Activated CD4-positive, alpha-beta T cell treated with anti-CD3 and anti-CD28 coated beads for 36 hours (primary cell): ENCODE measurements at regions of chr16 and their contacts with region 1.

Region 1: GRCh38 chr16:30922960-30923535 is 324 bp upstream of the FBXL19 start:
- DNase-seq: peak; percentile 98
- ATAC-seq: peak; percentile 76
- H3K4me3 Mint-ChIP-seq: peak overlapping the region; percentile 88
- H3K27ac Mint-ChIP-seq: peak overlapping the region; percentile 100
- H3K4me1 Mint-ChIP-seq: peaks cover 20% of the 10 kb centered on the region
- H3K27me3 Mint-ChIP-seq: no peaks in the 10 kb centered on the region

Region 2: GRCh38 chr16:30370444-30371247 is 552.4 kb before region 1 on chr16 and contains the start of gene TBC1D10B:
- CTCF ChIA-PET with region 1: no interaction called
- POLR2A ChIA-PET with region 1: no interaction called
- intact Hi-C with region 1: loop called in 1 of 2 experiments (anchors 2 kb)
- DNase-seq: peak; percentile 99
- ATAC-seq: peak; percentile 88
- H3K4me3 Mint-ChIP-seq: peak within 1 kb of the TSS; percentile 89
- H3K27ac Mint-ChIP-seq: peak within 1 kb of the TSS; percentile 97
- H3K4me1 Mint-ChIP-seq: peaks cover 40% of the 10 kb centered on the region
- H3K27me3 Mint-ChIP-seq: no peaks in the 10 kb centered on the region
- total RNA-seq, gene TBC1D10B: 38.1 to 43.4 TPM

Region 3: GRCh38 chr16:30747799-30748634 is 175.0 kb before region 1 on chr16 and contains the start of gene PHKG2:
- CTCF ChIA-PET with region 1: interaction called, 4 read pairs
- POLR2A ChIA-PET with region 1: interaction called, 3 read pairs
- intact Hi-C with region 1: loop called in 1 of 2 experiments (anchors 2 kb)
- DNase-seq: peak; percentile 99
- ATAC-seq: peak; percentile 99
- H3K4me3 Mint-ChIP-seq: peak within 1 kb of the TSS; percentile 88
- H3K27ac Mint-ChIP-seq: peak within 1 kb of the TSS; percentile 88
- H3K4me1 Mint-ChIP-seq: peaks cover 21% of the 10 kb centered on the region
- H3K27me3 Mint-ChIP-seq: no peaks in the 10 kb centered on the region
- total RNA-seq, gene PHKG2: 21.8 to 26.0 TPM

Region 4: GRCh38 chr16:30874821-30875717 is 48.0 kb before region 1 on chr16:
- CTCF ChIA-PET with region 1: interaction called, 3 read pairs
- POLR2A ChIA-PET with region 1: no interaction called
- intact Hi-C with region 1: loop called (anchors 1 to 2 kb)
- DNase-seq: peak; percentile 94
- ATAC-seq: peak; percentile 82
- H3K4me3 Mint-ChIP-seq: peak overlapping the region; percentile 87
- H3K27ac Mint-ChIP-seq: peak overlapping the region; percentile 93
- H3K4me1 Mint-ChIP-seq: peaks cover 24% of the 10 kb centered on the region
- H3K27me3 Mint-ChIP-seq: no peaks in the 10 kb centered on the region

Region 5: GRCh38 chr16:30977502-30977901 is 54.5 kb after region 1 on chr16:
- CTCF ChIA-PET with region 1: no interaction called
- POLR2A ChIA-PET with region 1: no interaction called
- intact Hi-C with region 1: no loop called
- DNase-seq: peak; percentile 62
- ATAC-seq: peak; percentile 59
- H3K4me3 Mint-ChIP-seq: no peak overlapping the region
- H3K27ac Mint-ChIP-seq: no peak overlapping the region
- H3K4me1 Mint-ChIP-seq: no peaks in the 10 kb centered on the region
- H3K27me3 Mint-ChIP-seq: no peaks in the 10 kb centered on the region

Region 6: DNA sequence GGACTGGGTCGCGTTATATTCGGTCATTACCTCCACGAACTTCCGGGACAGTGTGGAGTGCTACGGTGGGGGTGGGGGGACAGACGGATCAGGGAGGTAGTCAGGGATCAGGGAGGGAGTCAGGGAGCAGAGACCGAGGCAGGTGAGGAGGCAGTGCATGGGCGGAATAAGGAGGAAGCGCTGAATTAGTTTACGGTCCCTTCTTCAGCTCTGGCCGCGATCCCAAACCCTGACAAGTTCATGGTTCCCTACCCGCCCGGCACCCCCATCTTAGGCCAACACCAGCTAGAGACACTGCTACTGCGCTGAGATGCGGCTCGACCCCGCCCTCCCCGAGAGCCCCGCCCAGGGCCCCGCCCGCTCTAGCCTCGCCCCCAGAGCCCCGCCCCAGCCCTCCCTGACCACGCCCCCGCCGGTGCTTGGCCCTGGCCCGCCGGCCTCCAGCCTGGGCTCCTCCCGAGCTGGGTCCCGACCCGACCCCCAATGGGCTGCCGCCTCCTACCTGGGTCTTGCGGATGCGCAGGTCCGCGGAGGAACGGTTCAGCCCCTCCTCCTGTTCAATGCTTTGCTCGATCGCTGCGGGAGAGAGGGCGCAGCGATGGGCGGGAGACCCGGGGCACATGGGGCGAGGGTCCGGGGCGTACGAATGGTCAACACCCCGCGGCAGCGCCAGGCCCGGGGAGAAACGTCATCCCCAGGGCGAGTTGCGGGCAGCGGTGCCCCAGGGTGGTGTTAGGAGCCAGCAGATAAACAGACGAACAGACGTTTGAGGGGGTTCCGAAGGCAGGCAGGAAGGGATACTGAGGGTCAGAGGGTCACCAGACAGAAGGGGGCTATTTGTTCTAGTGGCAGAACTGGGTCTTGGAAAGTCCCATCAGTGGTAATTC is 74.2 kb after region 1 on chr16:
- CTCF ChIA-PET with region 1: no interaction called
- POLR2A ChIA-PET with region 1: no interaction called
- intact Hi-C with region 1: loop called in 1 of 2 experiments (anchors 2 kb)
- DNase-seq: peak; percentile 94
- ATAC-seq: peak; percentile 95
- H3K4me3 Mint-ChIP-seq: peak overlapping the region; percentile 72
- H3K27ac Mint-ChIP-seq: no peak overlapping the region
- H3K4me1 Mint-ChIP-seq: peaks cover 16% of the 10 kb centered on the region
- H3K27me3 Mint-ChIP-seq: peaks cover 3% of the 10 kb centered on the region

Region 7: GRCh38 chr16:31117391-31118197 is 194.5 kb after region 1 on chr16 and contains the start of gene KAT8:
- CTCF ChIA-PET with region 1: no interaction called
- POLR2A ChIA-PET with region 1: no interaction called
- intact Hi-C with region 1: loop called in 1 of 2 experiments (anchors 1 kb)
- DNase-seq: peak; percentile 99
- ATAC-seq: peak; percentile 93
- H3K4me3 Mint-ChIP-seq: peak within 1 kb of the TSS; percentile 88
- H3K27ac Mint-ChIP-seq: peak within 1 kb of the TSS; percentile 83
- H3K4me1 Mint-ChIP-seq: peaks cover 14% of the 10 kb centered on the region
- H3K27me3 Mint-ChIP-seq: no peaks in the 10 kb centered on the region
- total RNA-seq, gene KAT8: 53.6 to 63.1 TPM